AG04449 (cell line): ENCODE measurements at regions of chr17 and their contacts with region 1.

Region 1: DNA sequence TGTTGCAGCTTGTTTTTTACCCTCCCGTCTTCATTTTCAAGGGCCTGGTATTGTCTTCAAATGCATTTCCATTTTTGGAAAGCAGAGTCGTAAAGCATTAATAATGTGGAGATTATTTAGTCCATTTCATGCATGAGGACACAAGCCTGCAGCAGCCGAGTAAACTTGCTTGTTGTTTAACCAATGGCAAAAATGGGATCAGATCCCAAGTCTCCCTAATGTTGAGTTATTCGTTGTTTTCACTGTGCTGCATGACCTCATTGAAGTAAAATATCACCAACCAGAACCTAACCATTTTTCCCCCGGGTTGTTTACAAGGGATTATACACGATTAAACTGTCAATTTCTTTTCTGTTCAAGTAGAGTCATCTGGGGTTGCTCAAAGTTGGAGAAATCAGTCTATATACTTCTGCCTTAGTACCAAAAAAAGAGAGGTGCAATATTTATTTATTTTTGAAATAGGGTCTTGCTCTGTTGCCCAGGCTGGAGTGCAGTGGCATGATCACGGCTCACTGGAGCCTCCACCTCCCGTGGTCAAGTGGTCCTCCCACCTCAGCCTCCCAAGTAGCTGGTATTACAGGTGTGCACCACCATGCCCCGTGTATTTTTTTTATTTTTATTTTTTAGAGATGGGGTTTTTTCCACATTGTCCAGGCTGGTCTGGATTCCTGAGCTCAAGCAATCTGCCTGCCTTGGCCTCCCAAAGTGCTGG is 12.4 kb downstream of the AMZ2 start:
- DNase-seq: no peak
- H3K4me3 ChIP-seq: no peak overlapping the region
- CTCF ChIP-seq: no peak

Region 2: GRCh38 chr17:68247445-68248198 is 12.6 kb before region 1 on chr17 and contains the start of gene AMZ2:
- CTCF ChIA-PET with region 1: interaction called, 27 read pairs
- POLR2A ChIA-PET with region 1: no interaction called
- DNase-seq: peak; percentile 34
- H3K4me3 ChIP-seq: peak within 1 kb of the TSS; percentile 80
- CTCF ChIP-seq: no peak

Region 3: DNA sequence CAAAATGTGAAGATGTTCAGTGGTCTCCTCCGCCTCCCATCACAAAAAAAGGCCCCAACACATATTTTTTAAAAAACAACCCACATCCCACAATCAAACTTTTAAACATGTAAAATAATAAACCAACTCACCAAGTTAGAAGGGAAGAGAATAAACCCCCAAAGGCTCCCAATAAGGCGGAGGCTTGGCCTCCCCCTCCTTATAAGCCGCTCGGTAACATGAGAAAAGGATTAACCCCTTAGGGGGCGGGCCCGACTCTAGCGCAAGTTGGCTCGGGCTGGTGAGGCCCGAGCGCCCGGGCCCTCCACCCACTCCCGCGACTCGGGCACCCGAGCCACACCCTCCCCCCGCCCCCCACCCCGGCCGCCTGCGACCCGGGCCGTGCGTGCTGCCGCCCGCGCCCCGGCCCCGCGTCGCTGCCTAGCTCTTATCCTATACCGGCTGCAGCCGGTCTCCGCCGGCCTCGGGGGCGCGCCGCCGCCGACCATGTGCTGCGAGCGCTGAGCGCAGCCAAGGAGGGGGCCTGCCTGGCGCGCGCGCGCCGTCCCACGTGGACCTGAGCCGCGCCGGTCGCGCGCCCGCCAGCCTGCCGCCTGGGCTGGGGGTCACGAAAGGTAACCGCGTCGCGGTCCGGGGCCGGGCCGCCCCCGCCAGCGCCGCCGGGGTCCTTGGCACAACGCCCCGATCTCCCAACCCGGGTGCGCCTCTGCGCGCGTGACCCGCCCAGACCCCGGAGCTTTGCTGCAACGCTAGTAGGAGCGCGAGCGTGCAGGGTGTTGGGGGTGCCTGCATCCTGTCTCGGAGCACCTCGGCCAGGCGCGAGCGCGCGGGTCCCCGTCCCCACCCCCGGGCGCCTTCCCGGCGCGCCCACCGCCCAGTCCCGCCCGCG is 31.0 kb after region 1 on chr17 and contains the starts of genes ARSG and SLC16A6:
- CTCF ChIA-PET with region 1: interaction called, 21 read pairs
- POLR2A ChIA-PET with region 1: no interaction called
- DNase-seq: no peak
- H3K4me3 ChIP-seq: peak within 1 kb of the TSS; percentile 61
- CTCF ChIP-seq: no peak

Region 4: DNA sequence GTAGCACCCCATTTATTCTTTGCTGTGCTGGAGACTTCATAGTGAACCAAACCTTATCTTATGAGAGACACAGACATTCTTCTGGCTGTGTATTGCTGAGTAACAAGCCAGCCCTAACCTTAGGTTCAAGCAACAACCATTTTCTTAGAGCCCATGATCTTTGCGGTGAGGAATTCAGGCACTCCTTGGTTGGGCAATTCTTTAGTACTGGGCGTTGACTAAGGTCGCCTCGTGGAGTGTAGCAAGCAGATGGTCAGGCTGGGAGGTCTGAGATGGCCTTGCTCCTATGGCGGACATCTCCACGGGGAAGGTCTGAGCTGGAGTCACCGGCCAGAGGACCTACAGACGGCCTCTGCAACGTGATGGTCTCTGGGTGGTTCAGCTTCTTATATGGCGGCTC is 74.2 kb after region 1 on chr17:
- CTCF ChIA-PET with region 1: no interaction called
- POLR2A ChIA-PET with region 1: no interaction called
- DNase-seq: no peak
- H3K4me3 ChIP-seq: no peak overlapping the region
- CTCF ChIP-seq: no peak

Region 5: DNA sequence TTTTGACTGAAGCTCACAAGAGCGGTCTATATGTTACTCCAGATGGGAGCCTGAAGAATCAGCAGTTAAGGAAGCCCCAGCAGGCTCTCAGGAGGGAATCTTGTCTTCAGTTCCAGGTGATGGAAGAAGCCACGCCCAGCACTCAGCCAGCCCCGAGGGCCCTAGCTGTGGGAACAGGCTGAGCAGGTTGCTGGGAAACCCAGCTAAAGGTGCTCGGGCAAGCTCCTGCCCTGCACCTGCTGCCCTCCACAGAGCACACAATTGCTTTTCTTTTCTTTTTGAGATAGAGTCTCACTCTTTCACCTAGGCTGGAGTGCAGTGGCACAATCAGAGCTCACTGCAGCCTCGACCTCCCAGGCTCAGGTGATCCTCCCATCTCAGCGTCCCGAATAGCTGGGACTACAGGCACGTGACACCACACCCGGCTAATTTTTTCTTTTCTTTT is 164.8 kb after region 1 on chr17:
- CTCF ChIA-PET with region 1: interaction called, 213 read pairs
- POLR2A ChIA-PET with region 1: no interaction called
- DNase-seq: no peak
- H3K4me3 ChIP-seq: no peak overlapping the region
- CTCF ChIP-seq: no peak

Region 6: DNA sequence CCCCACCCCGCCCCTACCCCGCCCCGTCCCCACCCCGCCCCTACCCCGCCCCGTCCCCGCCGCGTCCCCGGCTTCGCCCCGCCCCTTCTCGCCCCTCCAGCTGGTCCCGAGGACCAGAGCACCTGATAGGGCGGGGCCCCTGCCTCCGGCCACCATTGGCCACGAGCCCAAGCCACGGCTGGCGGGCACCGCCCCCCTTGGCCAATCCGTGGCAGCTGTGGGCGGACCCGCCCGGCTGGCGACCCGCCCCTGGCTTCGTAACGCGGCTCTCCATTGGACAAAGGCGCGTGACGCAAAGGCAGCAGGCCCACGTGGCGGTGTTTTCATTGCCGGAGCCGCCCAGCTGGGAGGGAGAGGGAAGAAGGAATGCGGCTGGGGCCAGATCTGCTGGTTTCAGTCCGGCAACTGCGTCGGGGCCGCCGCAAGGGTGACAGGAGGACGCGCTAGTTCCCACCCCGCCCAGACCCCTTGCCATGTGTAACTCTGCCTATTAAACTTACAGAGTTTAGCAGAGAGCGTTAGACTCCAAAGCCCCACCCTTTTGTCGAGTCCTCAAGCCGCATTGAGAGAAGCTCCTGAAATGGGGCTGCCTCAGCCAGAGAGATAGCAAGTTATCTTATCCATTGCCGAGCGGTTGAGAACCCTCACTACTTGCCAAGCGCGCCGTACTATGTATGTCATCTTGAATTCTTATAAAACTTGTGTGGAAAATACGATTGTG is 197.5 kb after region 1 on chr17:
- CTCF ChIA-PET with region 1: interaction called, 177 read pairs
- POLR2A ChIA-PET with region 1: no interaction called
- DNase-seq: peak; percentile 85
- H3K4me3 ChIP-seq: peak overlapping the region; percentile 94
- CTCF ChIP-seq: no peak